K562 (cell line): ENCODE measurements at regions of chr6 and their contacts with region 1.

Region 1: GRCh38 chr6:74137911-74138310 is 441.9 kb downstream of the CD109 start:
- DNase-seq: no peak
- ATAC-seq: no peak
- H3K4me3 ChIP-seq: no peak overlapping the region
- H3K27ac ChIP-seq: no peak overlapping the region
- H3K4me1 ChIP-seq: no peaks in the 10 kb centered on the region
- H3K27me3 ChIP-seq: no peaks in the 10 kb centered on the region
- CTCF ChIP-seq: no peak
- EP300 ChIP-seq: no peak
- POLR2A ChIP-seq: no peak
- RAD21 ChIP-seq: no peak

Region 2: DNA sequence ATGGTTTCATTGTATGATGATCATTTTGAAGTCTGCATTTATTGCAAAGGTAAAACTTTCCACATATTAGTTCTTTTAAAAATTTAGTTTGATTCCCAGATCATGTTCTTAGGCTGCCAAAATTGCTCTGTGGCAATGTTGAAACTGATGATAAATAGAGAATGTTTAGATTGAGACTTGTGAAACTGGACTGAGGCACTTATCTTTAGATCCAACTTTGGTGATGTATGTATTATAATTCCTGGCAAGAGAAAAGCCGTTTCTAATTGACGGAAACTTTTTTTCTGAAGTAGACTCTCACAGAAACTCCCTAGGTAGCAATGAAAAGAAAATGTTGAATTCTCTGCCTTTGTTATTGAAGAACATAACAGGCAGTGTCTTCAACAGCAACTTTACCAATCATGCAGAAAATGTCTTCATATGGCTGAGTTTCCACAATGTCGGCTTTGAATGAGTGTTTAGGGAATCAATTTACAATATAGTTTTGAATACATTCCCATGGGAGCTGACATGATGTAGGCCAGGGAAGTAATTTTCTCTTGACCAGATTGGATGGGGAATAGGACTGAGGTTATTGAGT is 14.3 kb after region 1 on chr6:
- CTCF ChIA-PET with region 1: no interaction called
- POLR2A ChIA-PET with region 1: no interaction called
- in situ Hi-C with region 1: no loop called
- intact Hi-C with region 1: loop called (anchors 1 kb)
- DNase-seq: no peak
- ATAC-seq: no peak
- H3K4me3 ChIP-seq: no peak overlapping the region
- H3K27ac ChIP-seq: no peak overlapping the region
- H3K4me1 ChIP-seq: no peaks in the 10 kb centered on the region
- H3K27me3 ChIP-seq: no peaks in the 10 kb centered on the region
- CTCF ChIP-seq: no peak
- EP300 ChIP-seq: no peak
- POLR2A ChIP-seq: no peak
- RAD21 ChIP-seq: no peak

Region 3: DNA sequence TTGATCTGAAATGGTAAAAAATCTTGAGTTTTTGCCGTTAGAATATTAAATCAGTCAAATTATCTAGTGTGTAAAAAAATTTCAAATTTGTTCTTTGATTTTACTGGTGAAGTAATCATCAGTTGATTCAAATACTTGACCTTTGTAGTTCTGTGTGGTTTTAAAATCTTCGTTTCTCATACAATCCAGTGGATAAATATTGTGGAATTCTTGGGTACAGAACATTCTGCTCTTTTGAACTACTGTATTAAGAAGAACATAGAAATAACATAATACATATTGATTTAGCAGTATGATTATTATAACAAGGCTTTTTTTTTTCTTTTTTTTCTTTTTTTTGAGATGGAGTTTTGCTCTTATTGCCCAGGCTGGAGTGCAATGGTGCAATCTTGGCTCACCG is 49.9 kb after region 1 on chr6:
- CTCF ChIA-PET with region 1: no interaction called
- POLR2A ChIA-PET with region 1: no interaction called
- in situ Hi-C with region 1: no loop called
- intact Hi-C with region 1: no loop called
- DNase-seq: no peak
- ATAC-seq: no peak
- H3K4me3 ChIP-seq: no peak overlapping the region
- H3K27ac ChIP-seq: no peak overlapping the region
- H3K4me1 ChIP-seq: no peaks in the 10 kb centered on the region
- H3K27me3 ChIP-seq: no peaks in the 10 kb centered on the region
- CTCF ChIP-seq: no peak
- EP300 ChIP-seq: no peak
- POLR2A ChIP-seq: no peak
- RAD21 ChIP-seq: no peak